HepG2 (cell line): ENCODE measurements at regions of chr1 and their contacts with region 1.

Region 1: DNA sequence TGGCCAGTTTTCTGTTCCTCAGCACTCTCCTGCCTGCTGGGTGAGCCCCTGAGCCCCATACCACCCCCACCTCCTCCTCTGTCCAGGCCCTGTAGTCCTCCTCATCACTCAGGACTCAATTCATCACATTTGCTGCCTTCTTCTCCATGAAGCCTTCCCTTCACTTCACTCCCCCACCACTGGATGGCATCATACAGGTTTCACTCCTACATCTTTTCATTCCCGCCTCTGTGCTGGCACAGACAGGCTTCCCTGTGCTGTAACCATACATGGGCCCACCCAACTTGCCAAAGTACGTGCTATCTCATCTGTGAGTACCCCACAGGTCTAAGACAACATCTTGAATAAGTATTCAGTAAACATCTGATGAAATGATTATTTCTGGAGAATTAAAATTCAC is 56.9 kb downstream of the SLC45A1 start:
- DNase-seq: peak; percentile 49
- ATAC-seq: peak; percentile 55
- H3K4me3 ChIP-seq: no peak overlapping the region
- H3K27ac ChIP-seq: no peak overlapping the region
- H3K4me1 ChIP-seq: peaks cover 36% of the 10 kb centered on the region
- H3K27me3 ChIP-seq: no peaks in the 10 kb centered on the region
- CTCF ChIP-seq: peak; percentile 55
- EP300 ChIP-seq: no peak
- POLR2A ChIP-seq: no peak
- RAD21 ChIP-seq: no peak

Region 2: DNA sequence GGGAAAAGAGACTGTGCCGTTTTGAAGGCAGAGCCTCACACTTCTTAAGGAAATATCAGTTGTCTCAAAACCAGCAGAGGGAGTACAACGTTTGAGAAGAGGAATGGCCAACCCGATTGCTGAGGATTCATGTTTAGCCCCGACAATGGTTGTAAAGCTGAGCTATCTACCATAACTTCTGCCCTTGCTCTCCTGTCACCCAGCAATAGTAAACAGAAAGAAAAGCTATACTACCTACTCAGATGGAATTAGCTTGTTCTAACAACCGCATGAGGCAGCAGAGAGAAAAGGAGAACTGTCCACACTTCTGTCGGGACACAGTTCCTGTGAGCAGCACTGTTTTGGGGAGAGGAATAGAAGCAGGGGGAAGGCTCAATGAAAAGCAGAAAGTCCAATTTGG is 34.3 kb after region 1 on chr1:
- CTCF ChIA-PET with region 1: no interaction called
- POLR2A ChIA-PET with region 1: no interaction called
- in situ Hi-C with region 1: no loop called
- intact Hi-C with region 1: no loop called
- DNase-seq: peak; percentile 9
- ATAC-seq: peak; percentile 57; the same call in 2 of the 3 replicates
- H3K4me3 ChIP-seq: no peak overlapping the region
- H3K27ac ChIP-seq: no peak overlapping the region
- H3K4me1 ChIP-seq: peaks cover 19% of the 10 kb centered on the region
- H3K27me3 ChIP-seq: no peaks in the 10 kb centered on the region
- CTCF ChIP-seq: peak; percentile 20; the same call in 1 of the 2 replicates
- EP300 ChIP-seq: no peak
- POLR2A ChIP-seq: no peak
- RAD21 ChIP-seq: no peak

Region 3: GRCh38 chr1:8423650-8424538 is 49.1 kb after region 1 on chr1:
- CTCF ChIA-PET with region 1: no interaction called
- POLR2A ChIA-PET with region 1: no interaction called
- in situ Hi-C with region 1: no loop called
- intact Hi-C with region 1: loop called (anchors 5 kb)
- DNase-seq: peak; percentile 71
- ATAC-seq: peak; percentile 82
- H3K4me3 ChIP-seq: peak overlapping the region; percentile 81 to 91 (median 85)
- H3K27ac ChIP-seq: peak overlapping the region; percentile 88
- H3K4me1 ChIP-seq: peaks cover 57% of the 10 kb centered on the region
- H3K27me3 ChIP-seq: no peaks in the 10 kb centered on the region
- CTCF ChIP-seq: no peak
- EP300 ChIP-seq: no peak
- POLR2A ChIP-seq: peak; percentile 36 to 43; a peak in 2 of 4 replicates
- RAD21 ChIP-seq: 0 out of 2 replicates have a peak, but pooled peaks have one; percentile 34

Region 4: GRCh38 chr1:8702850-8703810 is 328.3 kb after region 1 on chr1:
- CTCF ChIA-PET with region 1: no interaction called
- POLR2A ChIA-PET with region 1: no interaction called
- in situ Hi-C with region 1: no loop called
- intact Hi-C with region 1: loop called (anchors 10 kb)
- DNase-seq: peak; percentile 83
- ATAC-seq: peak; percentile 94
- H3K4me3 ChIP-seq: peak overlapping the region; percentile 76 to 89 (median 86)
- H3K27ac ChIP-seq: peak overlapping the region; percentile 83
- H3K4me1 ChIP-seq: peaks cover 74% of the 10 kb centered on the region
- H3K27me3 ChIP-seq: no peaks in the 10 kb centered on the region; a peak in 1 of 5 replicates
- CTCF ChIP-seq: peak; percentile 58
- EP300 ChIP-seq: peak in 1 of 2 experiments; percentile 56; a peak in 3 of 4 replicates
- POLR2A ChIP-seq: peak; percentile 80 to 82
- RAD21 ChIP-seq: peak; percentile 84